Heart right ventricle (tissue), 16 donors: ENCODE measurements at regions of chr1 and their contacts with region 1.

Region 1: DNA sequence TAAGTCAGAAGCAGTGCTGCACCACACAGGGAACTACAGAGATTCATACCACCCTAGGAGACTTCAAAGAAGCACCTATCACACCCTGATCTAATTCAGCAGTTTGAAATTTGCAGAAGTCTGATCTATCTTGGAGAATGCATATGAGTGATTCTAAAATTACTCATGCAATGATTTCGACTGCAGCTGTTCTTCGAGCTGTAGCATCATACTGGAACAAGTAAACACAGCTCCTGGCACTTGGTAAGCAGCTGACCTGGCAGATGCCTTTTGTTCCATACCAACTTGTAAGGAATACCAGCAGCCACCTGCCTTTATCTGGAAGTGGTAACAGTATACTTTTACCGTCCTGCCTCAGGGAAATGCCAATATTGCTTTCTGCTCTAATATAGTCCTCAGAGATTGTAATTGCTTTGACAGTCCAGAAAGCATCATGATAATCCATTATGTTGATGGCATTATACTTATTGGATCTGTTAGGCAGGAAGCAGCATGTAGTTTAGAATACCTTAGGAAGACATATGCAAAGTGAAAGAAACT is 25.7 kb downstream of the AADACL4 start:
- DNase-seq: no peak
- ATAC-seq: no peak
- H3K4me3 ChIP-seq: no peak overlapping the region
- H3K27ac ChIP-seq: no peak overlapping the region
- H3K4me1 ChIP-seq: no peaks in the 10 kb centered on the region
- H3K27me3 ChIP-seq: no peaks in the 10 kb centered on the region
- CTCF ChIP-seq: no peak

Region 2: GRCh38 chr1:12314333-12314903 is 355.2 kb before region 1 on chr1:
- intact Hi-C with region 1: loop called in 1 of 10 experiments (anchors 10 kb)
- DNase-seq: no peak
- ATAC-seq: peak in 5 of 8 donors; percentile 27 to 69 (median 63)
- H3K4me3 ChIP-seq: no peak overlapping the region
- H3K27ac ChIP-seq: peak overlapping the region in 4 of 10 donors; percentile 23 to 49 (median 32)
- H3K4me1 ChIP-seq: peaks cover 2 to 35% (median 11%) of the 10 kb centered on the region in 9 donors
- H3K27me3 ChIP-seq: no peaks in the 10 kb centered on the region
- CTCF ChIP-seq: peak; percentile 24 to 74 (median 57)

Region 3: DNA sequence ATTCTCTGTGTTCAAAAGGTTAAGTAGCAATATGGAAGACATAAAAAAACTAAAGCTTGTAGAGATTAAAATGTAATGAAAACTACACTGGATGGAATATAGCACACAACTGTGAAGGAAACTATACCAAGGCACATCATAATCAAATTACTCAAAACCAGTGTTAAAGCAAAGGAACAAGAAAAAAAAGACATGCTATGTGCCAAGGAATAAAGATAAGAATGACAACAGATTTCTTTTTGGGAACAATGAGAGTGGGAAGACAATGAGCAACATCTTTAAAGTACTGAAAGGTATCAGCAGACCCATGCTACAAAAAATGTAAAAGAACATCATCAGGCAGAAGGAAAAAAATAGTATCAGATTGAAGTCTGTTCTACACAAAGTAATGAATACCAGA is 282.0 kb before region 1 on chr1:
- intact Hi-C with region 1: no loop called
- DNase-seq: no peak
- ATAC-seq: no peak
- H3K4me3 ChIP-seq: no peak overlapping the region
- H3K27ac ChIP-seq: no peak overlapping the region
- H3K4me1 ChIP-seq: no peaks in the 10 kb centered on the region
- H3K27me3 ChIP-seq: no peaks in the 10 kb centered on the region
- CTCF ChIP-seq: no peak

Region 4: GRCh38 chr1:14140831-14141401 is 1471.3 kb after region 1 on chr1:
- intact Hi-C with region 1: loop called in 1 of 10 experiments (anchors 10 kb)
- DNase-seq: peak; percentile 67 to 75
- ATAC-seq: peak; percentile 69 to 92 (median 84)
- H3K4me3 ChIP-seq: no peak overlapping the region
- H3K27ac ChIP-seq: peak overlapping the region in 5 of 10 donors; percentile 4 to 64 (median 49)
- H3K4me1 ChIP-seq: peaks cover 0 to 18% (median 7%) of the 10 kb centered on the region in 9 donors
- H3K27me3 ChIP-seq: no peaks in the 10 kb centered on the region
- CTCF ChIP-seq: no peak